ENCODE measurements at regions of chr1 and their contacts with region 1.

Region 1: DNA sequence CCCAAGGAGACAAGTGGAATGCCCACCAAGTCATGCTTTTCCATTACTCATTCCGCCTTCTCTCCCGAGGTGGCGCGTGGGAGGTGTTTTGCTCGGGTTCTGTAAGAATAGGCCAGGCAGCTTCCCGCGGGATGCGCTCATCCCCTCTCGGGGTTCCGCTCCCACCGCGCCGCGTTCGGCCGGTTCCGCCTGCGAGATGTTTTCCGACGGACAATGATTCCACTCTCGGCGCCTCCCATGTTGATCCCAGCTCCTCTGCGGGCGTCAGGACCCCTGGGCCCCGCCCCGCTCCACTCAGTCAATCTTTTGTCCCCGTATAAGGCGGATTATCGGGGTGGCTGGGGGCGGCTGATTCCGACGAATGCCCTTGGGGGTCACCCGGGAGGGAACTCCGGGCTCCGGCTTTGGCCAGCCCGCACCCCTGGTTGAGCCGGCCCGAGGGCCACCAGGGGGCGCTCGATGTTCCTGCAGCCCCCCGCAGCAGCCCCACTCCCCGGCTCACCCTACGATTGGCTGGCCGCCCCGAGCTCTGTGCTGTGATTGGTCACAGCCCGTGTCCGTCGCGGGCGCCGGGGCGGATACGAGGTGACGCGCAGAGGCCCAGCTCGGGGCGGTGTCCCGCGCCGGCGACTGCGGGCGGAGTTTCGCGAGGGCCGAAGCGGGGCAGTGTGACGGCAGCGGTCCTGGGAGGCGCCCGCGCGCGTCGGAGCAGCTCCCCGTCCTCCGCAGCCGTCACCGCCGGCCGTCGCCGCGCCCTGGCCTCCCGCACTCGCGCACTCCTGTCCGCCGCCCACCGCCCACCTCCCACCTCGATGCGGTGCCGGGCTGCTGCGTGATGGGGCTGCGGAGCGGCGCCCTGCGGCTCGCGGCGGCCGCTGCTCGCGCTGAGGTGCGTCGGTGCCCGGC is at the start of gene KIF1B:
- DNase-seq: peak; percentile 91
- ATAC-seq: peak; percentile 95
- H3K4me3 ChIP-seq: peak within 1 kb of the TSS; percentile 90 to 93 (median 91)
- H3K27ac ChIP-seq: peak within 1 kb of the TSS; percentile 86
- H3K4me1 ChIP-seq: peaks cover 44% of the 10 kb centered on the region
- H3K27me3 ChIP-seq: no peaks in the 10 kb centered on the region; a peak in 1 of 5 replicates
- CTCF ChIP-seq: peak; percentile 94
- EP300 ChIP-seq: no peak
- POLR2A ChIP-seq: peak; percentile 86 to 93
- RAD21 ChIP-seq: peak; percentile 88
- total RNA-seq, gene KIF1B: 26.7 and 43.6 TPM in 2 replicates

Region 2: DNA sequence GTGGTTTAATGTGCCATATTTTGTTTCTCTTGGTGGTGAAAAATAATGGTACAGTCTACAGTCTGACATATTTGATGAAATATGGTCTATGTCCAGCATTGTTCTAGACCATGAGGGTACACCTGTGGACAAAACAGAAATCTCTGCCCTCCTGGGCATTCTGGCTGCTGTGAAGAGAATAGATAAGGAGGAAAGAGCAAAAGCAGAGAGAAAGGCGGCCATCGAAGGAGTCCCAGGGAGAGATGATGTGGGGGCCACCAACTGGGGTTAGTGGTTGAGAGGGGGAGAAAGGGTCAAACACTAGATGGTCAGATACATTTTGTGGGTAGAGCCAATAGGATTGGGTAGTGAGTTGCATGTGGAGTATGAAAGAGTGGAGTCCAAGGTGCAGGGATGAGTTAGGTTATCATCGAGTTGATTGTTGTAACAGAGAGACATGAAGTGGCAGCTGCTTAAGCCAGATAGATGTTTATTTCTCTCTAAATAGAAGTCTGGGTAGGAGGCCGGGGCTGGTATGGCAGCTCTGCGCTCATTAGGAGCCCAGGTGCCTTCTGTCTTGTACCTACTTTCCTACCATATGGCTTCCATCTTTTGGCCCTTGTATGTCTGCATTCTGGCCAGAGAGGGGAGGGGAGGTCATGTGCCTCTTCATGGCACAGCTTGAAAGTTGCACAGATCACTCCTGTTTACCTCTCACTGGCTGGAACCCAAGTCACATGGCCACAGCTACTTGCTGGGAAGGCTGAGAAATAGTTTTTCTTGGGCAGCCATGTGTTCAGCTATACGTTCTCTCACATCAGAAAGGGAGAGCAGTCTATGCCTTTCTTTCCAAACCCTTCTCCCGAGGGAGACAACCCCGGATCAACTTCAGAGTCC is 164.4 kb before region 1 on chr1:
- CTCF ChIA-PET with region 1: no interaction called
- POLR2A ChIA-PET with region 1: no interaction called
- in situ Hi-C with region 1: no loop called
- intact Hi-C with region 1: no loop called
- DNase-seq: no peak
- ATAC-seq: no peak; the same call in 2 of the 3 replicates
- H3K4me3 ChIP-seq: no peak overlapping the region
- H3K27ac ChIP-seq: no peak overlapping the region
- H3K4me1 ChIP-seq: peaks cover 24% of the 10 kb centered on the region
- H3K27me3 ChIP-seq: no peaks in the 10 kb centered on the region
- CTCF ChIP-seq: no peak
- EP300 ChIP-seq: no peak
- POLR2A ChIP-seq: no peak
- RAD21 ChIP-seq: no peak

Region 3: DNA sequence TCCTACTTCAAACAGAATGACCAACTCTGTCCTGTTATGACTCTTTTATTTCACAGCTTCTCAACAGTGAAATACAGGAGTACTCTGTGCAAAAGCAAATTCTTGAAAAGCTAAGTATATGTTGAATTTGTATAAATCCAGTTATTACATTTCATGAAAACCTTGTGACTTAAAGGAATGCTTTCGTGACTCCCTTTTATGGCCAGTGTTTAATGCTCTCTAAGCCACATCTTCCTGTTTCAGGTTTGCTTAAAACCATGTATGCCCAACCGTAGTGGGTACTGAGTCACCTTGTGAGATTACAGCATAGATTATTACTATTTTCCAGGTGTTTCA is 40.0 kb before region 1 on chr1:
- CTCF ChIA-PET with region 1: no interaction called
- POLR2A ChIA-PET with region 1: interaction called, 5 read pairs
- in situ Hi-C with region 1: no loop called
- intact Hi-C with region 1: loop called (anchors 5 kb)
- DNase-seq: no peak
- ATAC-seq: no peak
- H3K4me3 ChIP-seq: peak overlapping the region in 1 of 3 experiments; percentile 7; a peak in 1 of 6 replicates
- H3K27ac ChIP-seq: peak overlapping the region; percentile 92
- H3K4me1 ChIP-seq: peaks cover 53% of the 10 kb centered on the region
- H3K27me3 ChIP-seq: no peaks in the 10 kb centered on the region
- CTCF ChIP-seq: no peak
- EP300 ChIP-seq: no peak
- POLR2A ChIP-seq: no peak
- RAD21 ChIP-seq: no peak

Region 4: DNA sequence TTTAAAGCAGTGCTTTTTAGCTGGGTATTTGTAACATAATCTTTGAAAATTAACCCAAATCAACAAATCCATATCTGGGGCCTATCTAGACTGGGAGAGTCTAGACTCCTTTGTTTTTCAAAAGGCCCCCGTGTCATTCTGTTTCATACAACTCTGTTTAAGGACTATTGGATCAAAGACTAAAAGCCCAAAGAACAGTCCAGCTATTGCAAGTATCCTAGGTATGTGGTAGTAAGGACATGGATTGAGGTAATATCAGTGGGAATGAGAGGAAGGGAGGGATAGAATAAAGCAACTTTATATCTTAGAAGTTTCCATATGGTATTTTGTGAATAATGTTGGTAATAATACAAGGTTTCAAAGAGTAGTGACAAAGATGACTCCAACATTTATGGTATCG is 18.4 kb after region 1 on chr1:
- CTCF ChIA-PET with region 1: no interaction called
- POLR2A ChIA-PET with region 1: interaction called, 5 read pairs
- in situ Hi-C with region 1: no loop called
- intact Hi-C with region 1: loop called (anchors 2 kb)
- DNase-seq: peak; percentile 62
- ATAC-seq: peak; percentile 68
- H3K4me3 ChIP-seq: no peak overlapping the region
- H3K27ac ChIP-seq: peak overlapping the region; percentile 37
- H3K4me1 ChIP-seq: peaks cover 52% of the 10 kb centered on the region
- H3K27me3 ChIP-seq: no peaks in the 10 kb centered on the region
- CTCF ChIP-seq: no peak
- EP300 ChIP-seq: peak in 1 of 2 experiments; percentile 28; a peak in 1 of 4 replicates
- POLR2A ChIP-seq: no peak
- RAD21 ChIP-seq: no peak

Region 5: GRCh38 chr1:10267319-10267718 is 57.2 kb after region 1 on chr1:
- CTCF ChIA-PET with region 1: no interaction called
- POLR2A ChIA-PET with region 1: no interaction called
- in situ Hi-C with region 1: no loop called
- intact Hi-C with region 1: no loop called
- DNase-seq: no peak
- ATAC-seq: no peak
- H3K4me3 ChIP-seq: no peak overlapping the region
- H3K27ac ChIP-seq: no peak overlapping the region
- H3K4me1 ChIP-seq: peaks cover 10% of the 10 kb centered on the region
- H3K27me3 ChIP-seq: no peaks in the 10 kb centered on the region
- CTCF ChIP-seq: no peak
- EP300 ChIP-seq: no peak
- POLR2A ChIP-seq: no peak
- RAD21 ChIP-seq: no peak